Caco-2 (cell line): ENCODE measurements at regions of chr20 and their contacts with region 1.

Region 1: DNA sequence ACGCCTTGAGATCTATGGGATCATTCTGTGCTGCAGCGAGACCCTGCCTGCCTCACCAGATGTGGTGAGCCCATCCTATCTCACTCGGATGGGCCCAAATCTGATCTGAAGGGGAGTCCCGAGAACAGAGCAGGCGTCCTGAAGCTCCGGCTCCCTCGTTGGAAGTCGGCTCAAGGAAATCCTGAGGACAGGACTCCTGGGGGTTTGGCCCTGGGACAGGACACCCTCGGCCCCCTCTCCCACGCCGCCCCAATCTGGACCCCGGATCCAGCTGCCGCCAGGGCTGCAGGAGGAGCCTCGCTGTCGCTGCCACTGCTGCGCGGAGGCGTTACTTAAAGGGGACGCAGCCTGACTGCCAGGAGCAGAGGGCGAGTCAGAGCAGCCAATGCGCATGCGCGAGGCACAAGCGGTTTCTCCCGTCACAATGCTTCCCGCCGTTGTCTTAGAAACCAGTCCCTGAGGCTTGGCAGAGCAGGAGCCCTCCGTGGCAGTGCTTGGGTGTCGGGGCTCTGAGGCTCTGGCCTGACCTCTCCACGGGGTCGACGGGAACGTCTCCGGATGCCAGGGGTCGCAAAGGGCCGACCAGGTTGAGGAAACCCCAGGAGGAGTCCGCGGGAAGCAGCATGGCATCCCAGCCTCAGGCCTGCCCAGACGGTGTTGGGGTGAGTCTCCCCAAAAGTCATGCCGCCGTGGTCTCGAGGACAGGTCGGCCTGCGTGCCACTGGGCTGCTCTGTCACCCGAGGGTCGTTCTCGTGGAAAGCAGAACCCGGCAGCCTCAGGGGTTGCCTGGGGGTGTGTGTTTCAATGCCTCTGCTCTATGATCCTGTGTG is 1567.8 kb upstream of the DEFB115 start:
- DNase-seq: peak; percentile 69 to 77
- H3K4me3 ChIP-seq: peak overlapping the region; percentile 32
- H3K4me3 Mint-ChIP-seq: peak overlapping the region; percentile 13
- H3K27ac Mint-ChIP-seq: peak overlapping the region; percentile 19
- H3K4me1 ChIP-seq: no peaks in the 10 kb centered on the region
- H3K4me1 Mint-ChIP-seq: no peaks in the 10 kb centered on the region
- H3K27me3 ChIP-seq: no peaks in the 10 kb centered on the region
- H3K27me3 Mint-ChIP-seq: no peaks in the 10 kb centered on the region
- CTCF ChIP-seq: no peak

Region 2: GRCh38 chr20:29443819-29444218 is 245.8 kb before region 1 on chr20:
- CTCF ChIA-PET with region 1: no interaction called
- POLR2A ChIA-PET with region 1: no interaction called
- intact Hi-C with region 1: no loop called
- DNase-seq: no peak
- H3K4me3 ChIP-seq: no peak overlapping the region
- H3K4me3 Mint-ChIP-seq: no peak overlapping the region
- H3K27ac Mint-ChIP-seq: no peak overlapping the region
- H3K4me1 ChIP-seq: peaks cover 21% of the 10 kb centered on the region
- H3K4me1 Mint-ChIP-seq: peaks cover 18% of the 10 kb centered on the region
- H3K27me3 ChIP-seq: no peaks in the 10 kb centered on the region
- H3K27me3 Mint-ChIP-seq: no peaks in the 10 kb centered on the region
- CTCF ChIP-seq: no peak

Region 3: DNA sequence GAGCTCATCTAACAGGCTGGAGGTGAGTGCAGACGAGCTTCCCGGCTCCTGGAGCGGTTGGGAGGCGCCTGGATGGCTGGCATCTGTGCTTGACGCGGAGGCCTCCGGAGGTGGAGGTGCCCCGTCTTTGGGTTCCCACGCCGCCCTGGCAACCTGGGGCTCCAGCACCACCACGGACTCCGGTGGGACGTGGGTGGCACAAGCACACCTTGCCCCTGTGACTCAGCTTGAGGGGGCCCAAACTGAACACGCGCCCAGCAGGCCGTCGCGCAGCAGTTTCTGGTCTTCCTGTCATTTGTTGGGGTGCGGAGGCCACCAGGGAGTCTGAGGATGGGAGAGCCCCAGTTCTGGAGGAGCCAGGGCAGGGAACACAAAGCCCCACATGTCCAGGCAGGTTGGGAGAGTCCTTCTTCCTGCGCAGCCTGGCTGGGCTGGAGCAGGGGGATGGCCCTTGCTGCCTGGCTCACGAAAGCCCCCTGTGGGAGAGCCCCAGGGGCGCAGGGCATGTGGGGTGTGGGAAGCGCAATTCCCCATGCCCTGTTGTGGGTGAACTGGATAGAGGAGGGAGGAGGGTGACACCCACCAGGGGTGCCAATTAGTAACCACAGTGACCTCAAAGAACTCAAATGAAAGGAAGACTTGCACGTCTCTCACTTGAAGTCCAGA is 189.3 kb after region 1 on chr20:
- CTCF ChIA-PET with region 1: no interaction called
- POLR2A ChIA-PET with region 1: no interaction called
- intact Hi-C with region 1: loop called (anchors 1 kb)
- DNase-seq: peak in 1 of 2 experiments; percentile 34
- H3K4me3 ChIP-seq: no peak overlapping the region
- H3K4me3 Mint-ChIP-seq: no peak overlapping the region
- H3K27ac Mint-ChIP-seq: no peak overlapping the region
- H3K4me1 ChIP-seq: peaks cover 14% of the 10 kb centered on the region
- H3K4me1 Mint-ChIP-seq: peaks cover 10% of the 10 kb centered on the region
- H3K27me3 ChIP-seq: no peaks in the 10 kb centered on the region
- H3K27me3 Mint-ChIP-seq: no peaks in the 10 kb centered on the region
- CTCF ChIP-seq: no peak

Region 4: GRCh38 chr20:30286162-30286561 is 596.5 kb after region 1 on chr20:
- CTCF ChIA-PET with region 1: no interaction called
- POLR2A ChIA-PET with region 1: no interaction called
- intact Hi-C with region 1: loop called (anchors 10 kb)
- DNase-seq: peak; percentile 77 to 81
- H3K4me3 ChIP-seq: no peak overlapping the region
- H3K4me3 Mint-ChIP-seq: no peak overlapping the region
- H3K27ac Mint-ChIP-seq: no peak overlapping the region
- H3K4me1 ChIP-seq: peaks cover 33% of the 10 kb centered on the region
- H3K4me1 Mint-ChIP-seq: peaks cover 35% of the 10 kb centered on the region
- H3K27me3 ChIP-seq: no peaks in the 10 kb centered on the region
- H3K27me3 Mint-ChIP-seq: no peaks in the 10 kb centered on the region
- CTCF ChIP-seq: peak; percentile 68 to 81